Activated naive CD4-positive, alpha-beta T cell treated with anti-CD3 and anti-CD28 coated beads for 36 hours (primary cell): ENCODE measurements at regions of chr19 and their contacts with region 1.

Region 1: DNA sequence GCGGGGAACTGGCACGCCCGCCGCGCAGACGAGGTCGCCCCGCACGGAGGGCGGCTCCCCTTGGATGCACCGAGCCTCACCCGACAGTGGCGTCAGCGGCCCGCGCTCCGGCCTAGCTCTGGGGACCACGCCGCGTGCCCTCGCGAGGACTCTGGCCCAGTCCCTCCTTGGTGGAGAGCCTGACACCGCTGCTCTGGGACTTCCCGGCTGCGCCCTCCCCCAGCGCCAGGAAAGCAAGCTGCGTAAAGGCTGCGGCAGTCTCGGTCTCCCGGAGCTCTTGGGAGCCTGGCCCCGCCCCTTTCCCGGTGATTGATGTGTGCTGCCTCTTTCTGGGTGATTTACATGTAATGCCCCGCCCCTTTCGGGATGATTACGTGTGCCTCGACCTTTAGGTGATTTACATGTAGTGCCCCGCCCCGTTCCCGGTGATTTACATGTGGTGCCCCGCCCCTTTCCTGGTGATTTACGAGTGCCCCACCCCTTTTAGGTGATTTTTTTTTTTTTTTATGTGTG is at the start of gene LENG9:
- DNase-seq: peak; percentile 100
- H3K4me3 Mint-ChIP-seq: peak within 1 kb of the TSS; percentile 84
- H3K27ac Mint-ChIP-seq: peak within 1 kb of the TSS; percentile 92
- H3K4me1 Mint-ChIP-seq: peaks cover 21% of the 10 kb centered on the region
- H3K27me3 Mint-ChIP-seq: peaks cover 13% of the 10 kb centered on the region
- total RNA-seq, gene LENG9: 5.7 to 7.1 TPM

Region 2: DNA sequence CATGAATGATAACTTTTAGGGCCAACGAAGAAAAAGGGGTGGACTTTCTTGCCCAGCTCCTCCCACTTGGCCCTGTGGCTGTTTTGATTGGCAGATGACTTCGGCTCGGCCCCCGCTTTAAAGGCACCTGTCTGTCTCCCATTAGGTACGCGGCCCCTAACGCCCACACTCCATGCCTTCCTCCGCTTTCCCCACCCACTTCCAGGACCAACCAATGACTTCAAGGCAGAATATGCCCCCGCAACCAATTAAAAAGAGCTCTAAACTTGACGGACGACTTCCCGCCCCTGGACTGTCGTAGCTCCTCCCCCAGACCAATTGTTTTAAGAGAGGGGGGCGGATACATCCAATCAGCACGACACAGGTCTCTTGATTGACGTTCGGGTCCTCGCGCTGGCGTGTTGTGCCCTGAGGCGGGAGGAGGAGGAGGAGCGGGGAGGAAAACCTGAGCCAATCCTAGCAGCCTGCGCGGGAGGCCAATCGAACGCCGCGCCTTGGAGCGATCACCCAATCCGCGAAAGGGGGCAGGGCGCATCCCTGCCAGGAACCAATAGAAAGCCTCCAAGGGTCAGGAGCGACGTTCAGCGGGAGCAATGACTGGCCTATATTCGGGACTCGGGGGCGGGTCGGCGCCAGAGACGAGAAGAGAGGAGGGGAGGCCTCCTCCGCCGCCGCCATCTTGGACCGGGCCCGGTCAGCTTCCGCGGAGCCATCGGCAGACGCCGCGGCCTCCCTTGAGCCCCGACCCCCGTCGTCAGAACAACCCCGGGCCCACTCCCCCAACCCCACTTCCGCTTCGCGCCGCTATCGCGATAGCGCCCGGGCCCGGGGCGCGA is 326.3 kb before region 1 on chr19 and contains the start of gene CNOT3:
- CTCF ChIA-PET with region 1: no interaction called
- intact Hi-C with region 1: loop called (anchors 1 kb)
- DNase-seq: peak; percentile 100
- H3K4me3 Mint-ChIP-seq: peak within 1 kb of the TSS; percentile 83
- H3K27ac Mint-ChIP-seq: peak within 1 kb of the TSS; percentile 89
- H3K4me1 Mint-ChIP-seq: peaks cover 39% of the 10 kb centered on the region
- H3K27me3 Mint-ChIP-seq: no peaks in the 10 kb centered on the region
- total RNA-seq, gene CNOT3: 50.4 to 58.3 TPM

Region 3: GRCh38 chr19:54448774-54449700 is 14.6 kb before region 1 on chr19 and contains the start of gene LENG8:
- CTCF ChIA-PET with region 1: interaction called, 7 read pairs
- intact Hi-C with region 1: loop called (anchors 1 kb)
- DNase-seq: peak; percentile 98
- H3K4me3 Mint-ChIP-seq: peak within 1 kb of the TSS; percentile 100
- H3K27ac Mint-ChIP-seq: peak within 1 kb of the TSS; percentile 99
- H3K4me1 Mint-ChIP-seq: peaks cover 45% of the 10 kb centered on the region
- H3K27me3 Mint-ChIP-seq: no peaks in the 10 kb centered on the region
- total RNA-seq, gene LENG8: 171 to 175 TPM

Region 4: GRCh38 chr19:55258828-55259539 is 795.4 kb after region 1 on chr19 and contains the start of gene PPP6R1:
- CTCF ChIA-PET with region 1: no interaction called
- intact Hi-C with region 1: loop called (anchors 1 kb)
- DNase-seq: peak; percentile 95
- H3K4me3 Mint-ChIP-seq: peak within 1 kb of the TSS; percentile 88
- H3K27ac Mint-ChIP-seq: peak within 1 kb of the TSS; percentile 99
- H3K4me1 Mint-ChIP-seq: peaks cover 16% of the 10 kb centered on the region
- H3K27me3 Mint-ChIP-seq: no peaks in the 10 kb centered on the region
- total RNA-seq, gene PPP6R1: 166 to 174 TPM

Region 5: GRCh38 chr19:55385740-55386529 is 922.3 kb after region 1 on chr19 and contains the start of gene RPL28:
- CTCF ChIA-PET with region 1: no interaction called
- intact Hi-C with region 1: loop called (anchors 5 kb)
- DNase-seq: peak; percentile 99
- H3K4me3 Mint-ChIP-seq: peak within 1 kb of the TSS; percentile 100
- H3K27ac Mint-ChIP-seq: peak within 1 kb of the TSS; percentile 97
- H3K4me1 Mint-ChIP-seq: peaks cover 59% of the 10 kb centered on the region
- H3K27me3 Mint-ChIP-seq: no peaks in the 10 kb centered on the region
- total RNA-seq, gene RPL28: 3,327 to 3,354 TPM

Region 6: GRCh38 chr19:55653758-55654539 is 1190.4 kb after region 1 on chr19:
- CTCF ChIA-PET with region 1: no interaction called
- intact Hi-C with region 1: loop called (anchors 10 kb)
- DNase-seq: peak; percentile 100
- H3K4me3 Mint-ChIP-seq: peak overlapping the region; percentile 88
- H3K27ac Mint-ChIP-seq: peak overlapping the region; percentile 98
- H3K4me1 Mint-ChIP-seq: peaks cover 43% of the 10 kb centered on the region
- H3K27me3 Mint-ChIP-seq: no peaks in the 10 kb centered on the region